Panc1 (cell line): ENCODE measurements at regions of chr4 and their contacts with region 1.

Region 1: GRCh38 chr4:83074086-83074704 is 39.2 kb downstream of the COPS4 start:
- DNase-seq: peak; percentile 35
- ATAC-seq: peak; percentile 80
- H3K4me3 ChIP-seq: no peak overlapping the region
- H3K27ac ChIP-seq: no peak overlapping the region; the same call in 1 of the 2 replicates
- H3K4me1 ChIP-seq: no peaks in the 10 kb centered on the region; the same call in 1 of the 2 replicates
- H3K27me3 ChIP-seq: no peaks in the 10 kb centered on the region
- CTCF ChIP-seq: peak; percentile 69; the same call in 1 of the 2 replicates

Region 2: DNA sequence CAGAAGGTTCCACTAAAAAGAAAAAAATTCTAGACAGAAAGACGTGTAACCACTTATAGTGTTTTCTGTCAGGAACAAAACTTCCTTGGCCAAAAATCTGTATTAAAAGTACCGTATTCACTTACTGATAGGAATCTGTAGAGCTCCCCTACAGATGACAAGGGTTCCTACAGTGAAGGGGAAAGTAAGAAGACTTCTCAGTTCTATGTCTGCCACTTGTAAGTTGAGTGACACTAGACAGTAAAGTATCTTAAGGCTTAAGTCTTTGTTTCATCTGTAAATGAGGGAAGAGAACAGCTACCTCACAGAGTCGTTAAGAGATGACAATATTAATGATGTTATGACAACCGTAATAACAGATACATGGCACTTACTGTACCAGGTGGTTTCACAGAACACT is 207.1 kb after region 1 on chr4:
- CTCF ChIA-PET with region 1: interaction called, 10 read pairs
- POLR2A ChIA-PET with region 1: no interaction called
- in situ Hi-C with region 1: no loop called
- intact Hi-C with region 1: no loop called
- DNase-seq: no peak
- ATAC-seq: no peak
- H3K4me3 ChIP-seq: peak overlapping the region in 1 of 2 experiments; percentile 14; a peak in 2 of 4 replicates
- H3K27ac ChIP-seq: peak overlapping the region; percentile 89
- H3K4me1 ChIP-seq: peaks cover 32% of the 10 kb centered on the region
- H3K27me3 ChIP-seq: no peaks in the 10 kb centered on the region
- CTCF ChIP-seq: no peak